Right cardiac atrium (tissue), 5 donors: ENCODE measurements at regions of chr17 and their contacts with region 1.

Region 1: DNA sequence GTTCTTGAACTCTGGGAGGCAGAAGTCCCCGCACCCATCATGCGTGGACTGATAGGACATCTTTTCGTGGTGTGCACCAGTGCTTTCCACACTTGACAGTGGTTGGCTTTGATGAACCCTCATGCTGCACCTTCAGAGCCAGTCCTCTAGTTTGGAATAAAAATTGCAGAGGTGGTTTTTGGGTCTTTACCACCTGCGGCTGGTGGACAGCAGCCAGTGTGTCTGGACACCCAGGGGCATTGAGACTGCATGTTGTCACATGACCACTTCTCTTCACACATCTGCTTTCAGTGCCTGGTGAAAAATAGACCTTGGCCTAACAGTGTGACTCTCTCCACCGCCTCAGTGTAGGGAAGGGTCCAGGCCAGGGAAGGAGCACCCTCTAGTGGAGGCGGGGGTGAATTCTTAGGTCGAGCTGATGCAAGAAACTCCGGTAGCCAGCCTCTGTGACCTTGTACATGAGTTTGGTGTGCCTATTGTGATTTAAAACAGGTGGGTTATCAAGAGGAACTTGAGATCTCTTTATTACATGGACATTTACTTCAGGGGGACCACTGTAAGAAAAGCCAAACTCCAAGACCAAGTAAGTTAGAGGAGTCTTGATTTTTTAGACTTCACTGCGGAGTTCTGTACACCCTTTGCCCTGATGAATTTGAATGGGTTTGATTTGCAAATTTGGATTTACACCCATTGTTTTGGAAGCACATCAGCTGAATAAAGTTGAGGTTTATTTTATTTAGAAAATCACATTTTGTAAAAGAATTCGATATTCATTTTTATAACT is 17.9 kb downstream of the GOSR2 start:
- DNase-seq: peak; percentile 75 to 87 (median 85)
- ATAC-seq: peak; percentile 63 to 75
- H3K4me3 ChIP-seq: no peak overlapping the region
- H3K27ac ChIP-seq: no peak overlapping the region
- H3K4me1 ChIP-seq: peaks cover 8% of the 10 kb centered on the region
- H3K27me3 ChIP-seq: no peaks in the 10 kb centered on the region

Region 2: GRCh38 chr17:46841561-46842379 is 99.0 kb before region 1 on chr17:
- intact Hi-C with region 1: loop called (anchors 5 to 10 kb)
- DNase-seq: peak in 1 of 3 donors; percentile 62
- ATAC-seq: peak; percentile 70 to 88
- H3K4me3 ChIP-seq: no peak overlapping the region
- H3K27ac ChIP-seq: no peak overlapping the region
- H3K4me1 ChIP-seq: no peaks in the 10 kb centered on the region
- H3K27me3 ChIP-seq: no peaks in the 10 kb centered on the region

Region 3: GRCh38 chr17:46995841-46996571 is 55.2 kb after region 1 on chr17:
- intact Hi-C with region 1: loop called in 3 of 4 experiments (anchors 2 to 5 kb)
- DNase-seq: no peak
- ATAC-seq: no peak
- H3K4me3 ChIP-seq: no peak overlapping the region
- H3K27ac ChIP-seq: no peak overlapping the region
- H3K4me1 ChIP-seq: no peaks in the 10 kb centered on the region
- H3K27me3 ChIP-seq: no peaks in the 10 kb centered on the region

Region 4: DNA sequence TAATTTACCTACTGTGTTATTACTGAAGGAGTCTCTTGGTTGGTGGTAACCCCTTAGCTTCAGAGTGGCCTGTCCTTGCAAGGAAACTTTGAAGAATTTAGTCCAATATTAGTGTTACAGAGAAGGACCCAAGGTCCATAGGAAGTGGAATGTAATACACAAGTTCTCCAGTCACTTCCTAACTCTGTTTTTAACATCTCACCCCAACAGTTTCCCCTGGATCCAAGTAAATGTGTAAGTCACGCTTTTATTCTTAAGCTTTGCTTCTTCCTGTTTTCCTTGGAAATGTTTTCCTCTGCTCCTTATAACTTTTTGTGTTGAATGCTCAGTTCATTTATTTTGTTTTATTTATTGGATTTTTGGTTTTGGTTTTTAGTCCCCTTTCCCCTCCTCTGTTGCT is 64.1 kb after region 1 on chr17:
- intact Hi-C with region 1: loop called in 2 of 4 experiments (anchors 2 to 5 kb)
- DNase-seq: no peak
- ATAC-seq: no peak
- H3K4me3 ChIP-seq: no peak overlapping the region
- H3K27ac ChIP-seq: no peak overlapping the region
- H3K4me1 ChIP-seq: no peaks in the 10 kb centered on the region
- H3K27me3 ChIP-seq: no peaks in the 10 kb centered on the region

Region 5: GRCh38 chr17:47159315-47159714 is 218.5 kb after region 1 on chr17:
- intact Hi-C with region 1: no loop called
- DNase-seq: no peak
- ATAC-seq: no peak
- H3K4me3 ChIP-seq: no peak overlapping the region
- H3K27ac ChIP-seq: no peak overlapping the region
- H3K4me1 ChIP-seq: peaks cover 1% of the 10 kb centered on the region
- H3K27me3 ChIP-seq: no peaks in the 10 kb centered on the region